AG04450 (cell line): ENCODE measurements at regions of chr11 and their contacts with region 1.

Region 1: GRCh38 chr11:2825889-2826678 is 59.5 kb downstream of the CDKN1C start:
- DNase-seq: peak; percentile 91
- H3K4me3 ChIP-seq: peak overlapping the region; percentile 43
- H3K27ac ChIP-seq: peak overlapping the region; percentile 99
- H3K27me3 ChIP-seq: no peaks in the 10 kb centered on the region
- CTCF ChIP-seq: no peak

Region 2: DNA sequence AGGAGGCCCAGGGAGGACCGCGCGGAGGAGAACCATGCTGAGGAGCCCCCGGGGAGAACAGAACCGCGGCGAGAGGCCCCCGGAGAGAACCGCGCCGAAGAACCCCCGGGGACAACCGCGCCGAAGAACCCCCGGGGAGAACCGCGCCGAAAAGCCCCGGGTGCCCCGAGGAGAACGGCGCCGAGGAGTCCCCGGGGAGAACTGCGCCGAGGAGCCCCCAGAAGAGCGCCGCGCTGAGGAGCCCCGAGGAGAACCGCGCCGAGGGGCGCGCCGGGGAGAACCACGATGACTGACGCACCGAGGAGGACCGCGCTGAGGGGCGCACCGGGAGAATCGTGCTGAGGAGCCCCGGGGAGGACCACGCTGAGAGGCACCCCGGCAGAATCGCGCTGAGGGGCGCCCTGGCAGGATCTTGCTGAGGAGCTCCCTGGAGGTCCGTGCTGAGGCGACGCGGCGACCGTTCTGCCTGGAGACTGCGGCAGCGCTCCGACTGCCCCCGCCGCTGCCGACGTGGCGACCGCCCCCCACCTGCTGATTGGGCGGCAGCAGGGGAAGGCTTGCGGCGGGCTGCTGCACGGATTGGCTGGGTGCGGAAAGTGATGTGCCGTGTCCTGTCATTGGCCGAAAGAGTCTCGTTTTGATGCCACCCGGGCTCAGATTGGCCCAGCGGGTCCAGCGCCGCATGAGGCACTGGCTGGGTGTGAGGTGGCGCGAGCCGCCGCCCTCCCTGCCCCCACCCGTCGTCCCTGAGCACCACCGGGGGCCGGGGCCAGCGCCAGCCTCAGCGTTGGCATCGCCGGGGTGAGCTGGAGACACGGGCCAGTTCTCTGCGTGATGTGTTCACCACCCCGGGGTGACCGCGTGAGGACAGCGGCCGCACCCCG is 126.3 kb before region 1 on chr11 and contains the start of gene KCNQ1OT1:
- CTCF ChIA-PET with region 1: no interaction called
- POLR2A ChIA-PET with region 1: interaction called, 10 read pairs
- DNase-seq: peak; percentile 78
- H3K4me3 ChIP-seq: peak within 1 kb of the TSS; percentile 61
- H3K27ac ChIP-seq: peak within 1 kb of the TSS; percentile 52
- H3K27me3 ChIP-seq: peaks cover 9% of the 10 kb centered on the region
- CTCF ChIP-seq: no peak
- polyA plus RNA-seq, gene KCNQ1OT1: 0.33 and 0.42 TPM in 2 replicates

Region 3: DNA sequence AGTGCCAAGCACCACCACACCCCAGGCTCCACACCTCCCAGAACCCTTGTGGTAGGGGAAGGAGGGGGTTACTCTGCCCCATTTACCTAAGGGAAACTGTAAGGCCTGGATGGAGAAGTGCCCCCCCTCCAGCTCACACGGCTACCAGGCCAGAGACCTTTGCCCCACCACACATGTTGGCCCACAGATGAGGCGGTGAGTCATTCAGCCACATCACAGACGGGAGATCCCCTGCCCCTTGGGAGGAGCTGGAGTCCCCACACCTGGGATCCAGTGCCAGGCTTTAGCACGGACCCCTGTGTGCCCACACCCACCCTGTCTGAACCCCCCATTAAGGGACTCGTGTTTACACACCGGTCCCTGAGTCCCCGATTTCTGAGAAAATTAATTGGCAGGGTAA is 34.6 kb after region 1 on chr11:
- CTCF ChIA-PET with region 1: no interaction called
- POLR2A ChIA-PET with region 1: no interaction called
- DNase-seq: no peak
- H3K4me3 ChIP-seq: no peak overlapping the region
- H3K27ac ChIP-seq: no peak overlapping the region
- H3K27me3 ChIP-seq: peaks cover 81% of the 10 kb centered on the region
- CTCF ChIP-seq: no peak